SK-N-SH (cell line): ENCODE measurements at regions of chr17 and their contacts with region 1.

Region 1: DNA sequence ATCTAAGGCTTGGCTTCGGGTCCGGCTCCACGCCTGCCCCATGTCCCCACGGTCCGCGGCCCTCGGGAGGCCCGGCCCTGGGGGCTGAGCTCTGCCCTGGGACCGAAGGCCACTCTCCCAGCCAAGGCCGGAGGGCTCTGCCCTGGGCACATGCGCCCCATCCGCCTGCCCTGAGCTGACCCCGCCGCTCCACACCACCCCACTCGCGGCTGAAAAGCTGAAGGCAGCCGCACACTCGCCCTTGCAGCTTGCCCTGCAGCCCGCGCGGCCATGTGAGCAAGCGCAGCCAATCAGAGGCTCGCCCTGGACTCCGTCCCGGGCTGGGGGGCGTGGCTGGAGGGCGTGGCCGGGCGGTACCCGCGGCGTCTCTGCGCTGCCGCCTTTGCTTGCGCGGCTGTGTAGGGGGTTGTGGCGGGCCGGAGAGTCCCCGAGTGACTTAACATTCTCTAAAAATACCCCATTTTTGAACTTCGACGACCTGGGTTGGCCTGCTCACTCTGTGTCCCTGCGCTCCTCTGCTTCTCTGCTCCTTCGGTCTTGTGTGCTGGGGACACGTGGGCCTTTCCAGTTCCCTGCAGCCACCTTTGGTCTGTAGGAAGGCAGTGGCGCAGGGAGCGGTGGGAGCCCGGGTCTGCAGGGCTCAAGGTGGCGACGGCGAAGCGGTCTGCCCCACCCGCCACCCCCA is 8.8 kb upstream of the MAP2K3 start:
- DNase-seq: peak; percentile 97
- H3K4me3 ChIP-seq: peak overlapping the region; percentile 54 to 63
- H3K27ac ChIP-seq: peak overlapping the region in 1 of 2 experiments; percentile 36; a peak in 1 of 4 replicates
- H3K4me1 ChIP-seq: peaks cover 6 to 14% of the 10 kb centered on the region in 2 experiments; a peak in 2 of 4 replicates
- H3K27me3 ChIP-seq: no peaks in the 10 kb centered on the region
- CTCF ChIP-seq: no peak
- EP300 ChIP-seq: no peak
- RAD21 ChIP-seq: no peak

Region 2: DNA sequence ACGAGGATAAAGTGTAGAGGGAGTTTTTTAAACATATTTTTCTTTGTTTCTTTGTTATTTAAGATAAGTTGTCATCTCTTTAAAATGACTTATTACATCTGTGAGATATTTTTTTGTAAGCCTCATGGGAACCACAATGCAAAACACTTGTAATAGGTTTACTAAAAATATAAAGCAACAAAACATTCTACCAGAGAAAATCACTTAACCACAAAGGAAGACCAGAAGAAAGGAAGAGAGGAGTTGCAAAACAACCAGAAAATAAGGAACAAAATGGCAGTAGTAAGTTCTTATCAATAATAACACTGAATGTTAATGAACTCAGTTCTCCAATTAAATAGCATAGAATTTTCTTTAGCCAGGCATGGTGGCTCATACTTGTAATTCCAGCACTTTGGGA is 126.1 kb before region 1 on chr17:
- CTCF ChIA-PET with region 1: no interaction called
- POLR2A ChIA-PET with region 1: no interaction called
- DNase-seq: no peak
- H3K4me3 ChIP-seq: no peak overlapping the region
- H3K27ac ChIP-seq: no peak overlapping the region
- H3K4me1 ChIP-seq: no peaks in the 10 kb centered on the region
- H3K27me3 ChIP-seq: no peaks in the 10 kb centered on the region
- CTCF ChIP-seq: no peak
- EP300 ChIP-seq: no peak
- RAD21 ChIP-seq: no peak

Region 3: DNA sequence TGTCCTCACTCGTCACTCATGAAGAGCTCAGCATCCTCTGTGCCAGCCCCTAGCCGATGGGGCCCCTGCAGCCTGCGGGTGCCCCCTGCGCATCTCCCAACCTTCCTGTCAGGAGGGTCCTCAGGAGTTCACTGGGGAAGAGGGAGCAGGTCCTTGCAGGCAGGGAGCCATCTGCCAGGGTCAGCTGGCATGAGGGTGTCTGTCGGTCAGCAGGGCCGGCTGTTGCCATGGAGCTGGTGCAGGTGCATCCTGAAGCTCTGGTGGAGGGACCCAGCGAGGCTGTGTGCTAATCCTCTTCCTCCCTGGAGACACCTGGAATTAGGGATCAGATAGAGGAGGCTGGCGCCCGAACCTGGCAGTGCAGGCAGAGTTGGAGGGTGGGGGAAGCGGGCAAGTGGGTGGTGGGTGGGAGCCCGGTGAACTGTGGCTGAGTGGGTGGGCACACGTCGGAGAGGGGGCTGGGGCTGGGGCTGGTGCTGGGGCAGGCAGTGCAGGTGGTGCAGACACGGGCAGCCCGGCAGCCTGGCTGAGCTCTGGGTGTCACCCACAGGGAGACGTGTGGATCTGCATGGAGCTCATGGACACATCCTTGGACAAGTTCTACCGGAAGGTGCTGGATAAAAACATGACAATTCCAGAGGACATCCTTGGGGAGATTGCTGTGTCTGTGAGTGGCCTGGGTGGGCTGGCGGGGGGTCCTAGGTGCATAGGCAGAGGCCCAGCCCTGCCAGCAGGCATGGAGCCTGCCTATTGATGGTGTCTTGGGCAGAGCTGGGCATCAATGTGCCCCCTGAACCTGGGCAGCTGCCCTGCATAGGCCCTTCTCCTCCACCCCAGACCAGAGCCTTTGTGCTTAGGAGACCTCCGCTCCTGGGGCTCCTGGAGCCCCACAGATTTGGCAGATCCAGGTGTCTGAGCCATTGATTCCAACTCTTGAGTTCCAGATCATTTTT is 26.1 kb after region 1 on chr17:
- CTCF ChIA-PET with region 1: interaction called, 22 read pairs
- POLR2A ChIA-PET with region 1: no interaction called
- DNase-seq: peak; percentile 52
- H3K4me3 ChIP-seq: no peak overlapping the region
- H3K27ac ChIP-seq: peak overlapping the region in 1 of 2 experiments; percentile 39; a peak in 1 of 4 replicates
- H3K4me1 ChIP-seq: peaks cover 0 to 26% of the 10 kb centered on the region in 2 experiments; a peak in 1 of 4 replicates
- H3K27me3 ChIP-seq: peaks cover 10% of the 10 kb centered on the region; the same call in 1 of the 2 replicates
- CTCF ChIP-seq: no peak
- EP300 ChIP-seq: no peak
- RAD21 ChIP-seq: no peak

Region 4: GRCh38 chr17:21379080-21379711 is 103.5 kb after region 1 on chr17:
- CTCF ChIA-PET with region 1: interaction called, 10 read pairs
- POLR2A ChIA-PET with region 1: no interaction called
- DNase-seq: no peak
- H3K4me3 ChIP-seq: no peak overlapping the region
- H3K27ac ChIP-seq: no peak overlapping the region
- H3K4me1 ChIP-seq: peaks cover 4 to 30% of the 10 kb centered on the region in 2 experiments; a peak in 2 of 4 replicates
- H3K27me3 ChIP-seq: peaks cover 31% of the 10 kb centered on the region
- CTCF ChIP-seq: no peak
- EP300 ChIP-seq: no peak
- RAD21 ChIP-seq: no peak